Activated CD8-positive, alpha-beta memory T cell treated with anti-CD3 and anti-CD28 coated beads, Interleukin-2, amount 10 ng/mL, durations not matched to agents 7 days and 5 days (primary cell): ENCODE measurements at regions of chr5 and their contacts with region 1.

Region 1: GRCh38 chr5:150458819-150459557 is 9.4 kb upstream of the RPS14 start:
- DNase-seq: peak; percentile 87
- ATAC-seq: peak; percentile 99
- H3K4me3 Mint-ChIP-seq: no peak overlapping the region
- H3K27ac Mint-ChIP-seq: peak overlapping the region; percentile 18
- H3K4me1 Mint-ChIP-seq: peaks cover 23% of the 10 kb centered on the region
- H3K27me3 Mint-ChIP-seq: no peaks in the 10 kb centered on the region

Region 2: GRCh38 chr5:150523472-150524350 is 64.7 kb after region 1 on chr5:
- CTCF ChIA-PET with region 1: interaction called, 14 read pairs
- DNase-seq: no peak
- ATAC-seq: no peak
- H3K4me3 Mint-ChIP-seq: no peak overlapping the region
- H3K27ac Mint-ChIP-seq: no peak overlapping the region
- H3K4me1 Mint-ChIP-seq: peaks cover 6% of the 10 kb centered on the region
- H3K27me3 Mint-ChIP-seq: no peaks in the 10 kb centered on the region

Region 3: GRCh38 chr5:150544611-150545219 is 85.7 kb after region 1 on chr5:
- CTCF ChIA-PET with region 1: interaction called, 30 read pairs
- DNase-seq: peak; percentile 78
- ATAC-seq: peak; percentile 96
- H3K4me3 Mint-ChIP-seq: no peak overlapping the region
- H3K27ac Mint-ChIP-seq: no peak overlapping the region
- H3K4me1 Mint-ChIP-seq: no peaks in the 10 kb centered on the region
- H3K27me3 Mint-ChIP-seq: no peaks in the 10 kb centered on the region